ENCODE measurements at regions of chr4 and their contacts with region 1.

Region 1: DNA sequence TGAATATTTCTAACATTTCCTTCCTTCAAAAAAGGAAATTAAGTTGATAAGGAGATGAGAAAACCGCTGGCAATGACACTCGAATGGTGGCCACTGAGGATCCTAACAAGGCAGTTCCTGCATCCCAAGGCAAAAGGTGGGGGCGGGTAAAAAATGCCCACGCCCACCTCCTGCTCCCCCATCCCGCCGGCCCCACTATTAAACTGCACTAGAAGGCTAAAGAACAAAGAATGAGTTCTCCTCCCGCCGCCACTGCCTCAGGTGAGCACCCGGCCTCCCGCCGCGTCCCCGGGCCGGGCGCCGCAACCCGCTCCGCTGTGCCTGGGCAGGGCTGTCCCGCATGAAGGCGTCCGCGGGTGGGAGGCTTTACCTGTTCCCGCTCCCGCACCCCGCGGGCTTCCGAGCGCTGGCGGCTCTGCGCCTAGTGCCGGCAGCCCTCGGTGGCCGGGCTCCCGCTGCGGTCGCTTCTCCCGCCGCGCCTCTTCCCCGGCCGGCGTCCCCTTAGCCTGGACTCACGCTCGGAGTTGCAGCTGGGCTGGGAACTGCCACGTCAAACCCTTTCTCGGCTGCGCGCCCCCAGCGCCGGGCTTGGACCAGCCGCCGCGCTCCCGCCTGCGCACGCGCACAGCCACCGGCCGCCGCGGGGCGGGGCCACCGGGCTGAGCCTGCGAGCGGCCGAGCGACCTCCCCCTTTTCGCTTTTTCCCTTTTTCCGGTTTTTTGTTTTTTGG is at the start of gene SEC24D:
- DNase-seq: no peak
- ATAC-seq: peak; percentile 83
- H3K4me3 ChIP-seq: peak within 1 kb of the TSS; percentile 77
- H3K27ac ChIP-seq: peak within 1 kb of the TSS; percentile 92
- H3K4me1 ChIP-seq: peaks cover 8% of the 10 kb centered on the region
- H3K27me3 ChIP-seq: no peaks in the 10 kb centered on the region
- CTCF ChIP-seq: no peak
- EP300 ChIP-seq: no peak
- POLR2A ChIP-seq: peak; percentile 84
- RAD21 ChIP-seq: no peak
- polyA plus RNA-seq, gene SEC24D: 12.8 to 16.0 TPM

Region 2: DNA sequence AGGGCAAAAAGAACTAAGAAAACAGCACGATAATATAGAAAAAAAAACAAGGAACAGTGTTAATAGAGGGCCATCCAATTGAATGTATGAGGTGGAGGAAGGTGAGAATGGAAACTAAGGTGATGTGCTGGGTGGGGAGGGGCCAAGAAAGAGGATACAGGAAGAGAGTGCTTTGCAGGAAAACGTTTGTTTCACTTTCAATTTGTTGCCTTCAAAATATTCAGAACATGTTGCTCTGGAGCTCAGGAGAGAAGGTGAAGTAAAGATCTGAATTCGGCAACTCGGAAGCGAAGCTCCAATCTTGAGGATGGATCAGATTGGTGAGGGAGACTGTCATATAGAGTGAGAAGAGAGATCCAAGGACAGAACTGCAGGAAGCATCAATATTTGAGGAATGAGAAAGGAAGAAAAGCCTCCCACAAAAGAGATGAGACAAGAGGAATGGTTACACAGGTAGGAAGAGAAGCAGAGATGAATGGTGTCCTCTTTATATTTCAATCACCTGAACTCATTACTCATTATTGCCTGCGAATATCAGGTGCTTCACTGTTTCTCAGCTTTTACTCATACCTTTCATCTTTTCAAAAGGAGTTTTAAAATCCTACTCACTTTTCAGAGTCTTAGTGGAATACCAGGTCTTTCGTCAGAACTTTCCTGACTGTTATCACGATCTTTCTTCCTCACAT is 14.9 kb after region 1 on chr4:
- CTCF ChIA-PET with region 1: interaction called, 10 read pairs
- POLR2A ChIA-PET with region 1: interaction called, 5 read pairs
- RAD21 ChIA-PET with region 1: interaction called, 6 read pairs
- SMC1A ChIA-PET with region 1: interaction called, 19 read pairs
- in situ Hi-C with region 1: no loop called
- intact Hi-C with region 1: no loop called
- DNase-seq: no peak
- ATAC-seq: peak; percentile 92
- H3K4me3 ChIP-seq: peak overlapping the region; percentile 76
- H3K27ac ChIP-seq: peak overlapping the region; percentile 34
- H3K4me1 ChIP-seq: peaks cover 3% of the 10 kb centered on the region; the same call in 1 of the 2 replicates
- H3K27me3 ChIP-seq: no peaks in the 10 kb centered on the region; a peak in 1 of 4 replicates
- CTCF ChIP-seq: no peak
- EP300 ChIP-seq: no peak
- POLR2A ChIP-seq: 0 out of 2 replicates have a peak, but pooled peaks have one; percentile 33
- RAD21 ChIP-seq: no peak

Measured in GM12878 (cell line).